ENCODE measurements at regions of chr2 and their contacts with region 1.

Region 1: GRCh38 chr2:69717861-69718273 is 24.1 kb upstream of the ANXA4 start:
- DNase-seq: no peak
- ATAC-seq: no peak
- H3K4me3 ChIP-seq: no peak overlapping the region
- H3K27ac ChIP-seq: no peak overlapping the region
- H3K4me1 ChIP-seq: no peaks in the 10 kb centered on the region
- H3K27me3 ChIP-seq: no peaks in the 10 kb centered on the region

Region 2: DNA sequence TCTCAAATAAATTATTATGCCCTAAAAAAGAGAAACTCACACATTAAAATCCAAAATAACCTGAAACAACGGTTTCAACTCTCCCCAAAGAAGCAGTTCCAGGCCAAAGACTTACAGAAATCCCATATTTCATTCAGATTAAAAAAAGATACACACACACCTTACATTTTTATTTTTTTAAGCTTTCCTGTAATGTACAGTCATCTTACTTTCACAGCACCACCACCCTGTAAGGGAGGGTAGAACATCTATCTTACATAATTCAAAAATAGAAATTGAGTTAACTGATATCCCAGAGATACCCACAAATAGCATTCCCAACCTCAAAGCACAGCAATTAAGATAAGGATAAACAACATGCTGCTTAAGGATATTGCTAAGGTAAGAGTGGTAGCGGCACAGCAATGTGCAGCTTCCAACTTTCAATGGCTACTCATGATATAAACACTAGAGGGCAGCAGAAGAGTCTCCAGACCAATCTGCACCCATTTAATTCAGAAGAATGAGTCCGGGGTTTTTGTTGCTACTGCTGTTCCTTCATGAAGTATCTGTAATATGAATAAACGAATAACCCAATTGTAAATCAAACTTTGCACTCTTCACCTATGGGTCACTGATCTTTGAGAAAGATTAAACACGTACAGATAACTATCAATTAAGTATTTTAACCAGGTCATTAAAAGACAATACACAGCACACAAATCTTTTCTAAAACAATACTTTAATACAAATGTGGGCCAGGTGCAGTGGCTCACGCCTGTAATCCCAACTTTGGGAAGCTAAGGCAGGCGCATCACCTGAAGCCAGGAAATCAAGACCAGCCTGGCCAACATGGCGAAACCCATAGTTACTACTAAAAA is 342.1 kb before region 1 on chr2:
- intact Hi-C with region 1: loop called in 1 of 2 experiments (anchors 10 kb)
- DNase-seq: no peak
- ATAC-seq: peak; percentile 81
- H3K4me3 ChIP-seq: no peak overlapping the region
- H3K27ac ChIP-seq: no peak overlapping the region
- H3K4me1 ChIP-seq: no peaks in the 10 kb centered on the region
- H3K27me3 ChIP-seq: no peaks in the 10 kb centered on the region

Region 3: GRCh38 chr2:69559442-69560146 is 158.3 kb before region 1 on chr2:
- intact Hi-C with region 1: loop called (anchors 2 to 5 kb)
- DNase-seq: no peak
- ATAC-seq: peak; percentile 65
- H3K4me3 ChIP-seq: no peak overlapping the region
- H3K27ac ChIP-seq: no peak overlapping the region
- H3K4me1 ChIP-seq: peaks cover 3 to 4% of the 10 kb centered on the region in 2 donors
- H3K27me3 ChIP-seq: no peaks in the 10 kb centered on the region

Region 4: DNA sequence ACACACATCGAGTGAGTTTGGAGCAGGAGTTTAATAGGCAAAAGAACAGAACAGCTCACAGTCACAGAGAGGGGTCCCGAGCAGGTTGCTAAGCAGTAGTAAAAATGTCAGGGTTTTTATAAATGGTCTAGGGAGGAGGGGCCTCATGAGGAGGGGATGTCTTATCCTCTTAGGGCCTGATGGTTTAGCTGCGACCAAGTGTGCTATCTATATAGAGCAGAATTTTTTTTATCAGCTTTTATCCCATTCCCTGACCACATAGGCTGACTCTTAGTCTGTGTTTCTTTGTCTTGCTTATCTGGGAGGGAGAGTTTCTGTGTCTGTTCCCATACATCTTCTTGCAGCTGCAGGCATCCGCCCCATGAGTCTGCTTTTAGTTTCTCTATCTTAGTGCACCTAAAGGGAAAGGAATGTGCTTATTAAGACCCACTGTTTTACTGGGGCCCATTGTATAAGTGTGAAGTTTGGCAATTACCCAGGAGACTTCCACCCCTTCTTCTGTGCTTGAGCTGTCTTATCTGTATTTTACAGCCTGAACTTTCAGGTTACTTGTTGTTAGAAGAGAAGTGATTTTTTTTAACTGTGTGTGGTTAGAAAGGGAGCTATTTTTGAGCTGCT is 81.2 kb after region 1 on chr2:
- intact Hi-C with region 1: no loop called
- DNase-seq: no peak
- ATAC-seq: no peak
- H3K4me3 ChIP-seq: peak overlapping the region; percentile 47 to 57
- H3K27ac ChIP-seq: peak overlapping the region; percentile 38 to 56
- H3K4me1 ChIP-seq: peaks cover 0 to 15% of the 10 kb centered on the region in 2 donors
- H3K27me3 ChIP-seq: no peaks in the 10 kb centered on the region

Region 5: DNA sequence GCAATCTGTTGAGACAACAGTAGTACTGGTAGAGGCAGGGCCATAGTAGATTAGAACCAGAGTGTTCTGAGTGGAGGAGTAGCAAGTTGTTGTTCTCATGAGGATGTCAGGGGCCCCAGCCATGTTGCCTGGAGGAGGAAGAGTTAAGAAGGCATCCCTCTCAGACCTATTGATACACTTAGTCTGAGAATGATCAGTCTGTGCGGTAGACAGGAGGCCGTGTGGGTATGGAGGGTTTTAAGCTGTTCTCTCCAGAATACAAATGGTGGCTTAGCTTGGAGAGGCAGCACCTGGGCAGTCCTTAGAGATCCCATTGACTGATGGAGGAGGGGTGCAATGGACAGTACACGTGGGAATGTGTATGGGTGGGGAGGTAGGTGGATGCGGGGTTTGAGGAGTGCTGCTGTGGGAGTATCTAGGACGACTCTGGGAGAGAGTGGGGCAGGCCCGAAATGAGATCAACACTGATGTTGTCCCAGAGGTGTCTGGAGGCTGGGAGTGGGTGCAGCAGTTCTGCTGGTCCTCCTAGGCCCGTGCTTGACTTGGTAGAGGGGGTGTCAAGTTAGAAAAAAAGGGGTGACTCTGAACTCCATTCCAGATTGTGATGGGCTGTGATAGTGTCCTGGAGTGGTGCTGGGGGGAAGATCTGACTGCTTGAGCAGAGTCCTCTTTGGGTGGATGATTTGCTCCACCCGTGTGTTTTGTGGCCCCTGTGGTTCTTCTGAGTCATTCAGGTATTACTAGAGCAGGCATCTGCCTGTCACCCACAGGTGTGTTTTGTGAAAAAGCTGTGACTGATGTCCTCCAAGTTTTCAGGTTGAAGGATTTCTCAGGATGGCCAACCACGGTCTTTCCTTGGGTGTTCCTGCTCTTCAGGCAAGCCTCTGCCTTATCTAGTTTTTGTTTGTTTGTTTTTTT is 428.2 kb after region 1 on chr2:
- intact Hi-C with region 1: no loop called
- DNase-seq: no peak
- ATAC-seq: no peak
- H3K4me3 ChIP-seq: no peak overlapping the region
- H3K27ac ChIP-seq: no peak overlapping the region
- H3K4me1 ChIP-seq: no peaks in the 10 kb centered on the region
- H3K27me3 ChIP-seq: no peaks in the 10 kb centered on the region